ENCODE measurements at regions of chr22 and their contacts with region 1.

Region 1: DNA sequence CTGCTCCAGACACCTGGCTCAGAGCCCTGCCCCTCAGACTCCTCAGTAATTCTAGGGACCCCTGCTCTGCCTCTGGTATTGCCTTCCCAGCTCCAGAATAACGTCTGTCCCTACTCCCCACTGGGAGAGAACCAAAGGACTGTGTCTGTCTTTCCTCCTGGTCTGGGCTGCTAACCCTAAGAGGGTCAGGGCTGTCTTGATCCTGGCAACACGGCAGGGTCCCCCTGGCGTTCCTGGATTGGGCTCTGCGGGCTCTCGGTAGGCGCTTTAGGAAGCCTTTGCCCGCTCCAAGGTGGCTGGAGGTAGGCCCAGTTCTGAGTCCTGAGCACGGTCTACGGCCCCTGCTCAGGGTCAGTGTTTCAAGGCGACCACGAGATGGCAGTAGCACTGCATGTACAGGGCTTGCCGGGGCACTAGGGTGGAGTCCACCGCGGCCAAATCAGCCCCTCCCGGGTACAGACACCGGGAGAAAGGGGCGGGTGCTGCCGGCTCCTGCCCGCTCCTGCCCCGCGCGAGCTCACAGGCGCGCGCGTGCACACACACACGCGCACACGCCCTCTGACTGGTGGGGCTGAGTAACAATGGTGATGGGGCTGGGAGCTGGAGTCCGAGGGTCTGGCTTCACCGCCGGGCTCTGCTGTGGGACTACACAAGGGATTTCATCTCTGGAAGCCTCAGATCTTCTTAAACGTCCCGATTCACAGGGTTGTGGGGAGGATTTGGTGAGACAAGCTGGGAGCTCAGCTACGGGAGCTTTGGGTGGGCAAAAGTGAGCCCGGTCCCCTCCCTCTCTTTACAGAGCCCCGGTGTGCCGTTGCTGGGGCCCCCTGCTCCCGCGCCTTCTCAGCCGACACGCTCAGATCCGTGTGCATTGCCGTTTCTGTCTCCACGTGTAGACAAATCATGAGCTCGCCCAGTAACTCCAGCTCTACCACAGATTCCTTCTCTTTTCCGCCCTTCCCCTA is 30.1 kb upstream of the HMOX1 start:
- DNase-seq: peak; percentile 94 to 96 (median 95)
- ATAC-seq: peak; percentile 85 to 93 (median 89)
- H3K4me3 ChIP-seq: peak overlapping the region; percentile 33 to 51 (median 36)
- H3K27ac ChIP-seq: peak overlapping the region in 2 of 3 donors; percentile 35 to 53
- H3K4me1 ChIP-seq: peaks cover 0 to 20% (median 0%) of the 10 kb centered on the region in 4 donors
- H3K27me3 ChIP-seq: no peaks in the 10 kb centered on the region
- CTCF ChIP-seq: peak; percentile 95 to 98 (median 96)
- POLR2A ChIP-seq: no peak

Region 2: GRCh38 chr22:35085621-35086020 is 265.2 kb before region 1 on chr22:
- intact Hi-C with region 1: no loop called
- DNase-seq: peak in 1 of 3 donors; percentile 52
- ATAC-seq: peak in 3 of 4 donors; percentile 37 to 58 (median 50)
- H3K4me3 ChIP-seq: no peak overlapping the region
- H3K27ac ChIP-seq: no peak overlapping the region
- H3K4me1 ChIP-seq: no peaks in the 10 kb centered on the region
- H3K27me3 ChIP-seq: no peaks in the 10 kb centered on the region
- CTCF ChIP-seq: no peak
- POLR2A ChIP-seq: no peak

Region 3: GRCh38 chr22:35409783-35410662 is 59.2 kb after region 1 on chr22:
- intact Hi-C with region 1: loop called in 1 of 2 experiments (anchors 10 kb)
- DNase-seq: peak in 2 of 3 donors; percentile 57 to 71
- ATAC-seq: peak; percentile 48 to 74 (median 64)
- H3K4me3 ChIP-seq: no peak overlapping the region
- H3K27ac ChIP-seq: peak overlapping the region in 2 of 3 donors; percentile 37 to 43
- H3K4me1 ChIP-seq: no peaks in the 10 kb centered on the region
- H3K27me3 ChIP-seq: no peaks in the 10 kb centered on the region
- CTCF ChIP-seq: no peak
- POLR2A ChIP-seq: no peak

Region 4: GRCh38 chr22:35489239-35489638 is 138.4 kb after region 1 on chr22:
- intact Hi-C with region 1: no loop called
- DNase-seq: no peak
- ATAC-seq: no peak
- H3K4me3 ChIP-seq: no peak overlapping the region
- H3K27ac ChIP-seq: no peak overlapping the region
- H3K4me1 ChIP-seq: no peaks in the 10 kb centered on the region
- H3K27me3 ChIP-seq: no peaks in the 10 kb centered on the region
- CTCF ChIP-seq: no peak
- POLR2A ChIP-seq: no peak

Region 5: DNA sequence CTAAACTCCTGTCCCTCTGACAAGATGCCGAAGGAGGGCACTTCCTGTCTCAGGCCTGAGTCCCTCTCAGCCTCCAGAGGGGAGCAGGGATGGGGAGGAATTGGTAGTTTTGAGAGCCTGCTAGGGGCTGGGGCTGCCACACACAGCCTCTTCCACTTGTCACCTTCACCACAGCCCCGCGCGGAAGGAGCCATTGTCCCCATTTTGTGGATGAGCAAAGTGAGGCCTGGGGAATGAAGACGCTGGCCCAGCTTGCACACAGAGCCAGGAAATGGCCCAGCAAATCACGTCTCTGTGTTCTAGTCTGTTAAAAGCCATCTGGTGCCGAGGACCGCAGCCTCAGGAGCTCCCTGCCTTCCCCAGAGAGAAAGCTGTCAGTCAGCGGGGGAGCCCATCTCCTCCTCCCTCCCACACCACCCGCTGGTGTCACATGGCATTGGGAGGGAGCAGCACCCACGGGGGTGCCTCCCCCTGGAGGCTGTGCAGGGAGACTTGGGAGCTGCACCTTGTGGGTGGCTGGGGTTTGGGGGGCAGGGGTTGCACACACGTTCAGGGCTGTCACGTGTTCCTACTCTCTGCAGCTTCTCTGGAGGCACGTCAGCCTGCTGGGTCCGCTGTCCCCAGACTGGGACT is 224.4 kb after region 1 on chr22:
- intact Hi-C with region 1: loop called (anchors 5 to 10 kb)
- DNase-seq: no peak
- ATAC-seq: no peak
- H3K4me3 ChIP-seq: no peak overlapping the region
- H3K27ac ChIP-seq: no peak overlapping the region
- H3K4me1 ChIP-seq: no peaks in the 10 kb centered on the region
- H3K27me3 ChIP-seq: no peaks in the 10 kb centered on the region
- CTCF ChIP-seq: no peak
- POLR2A ChIP-seq: no peak

Region 6: DNA sequence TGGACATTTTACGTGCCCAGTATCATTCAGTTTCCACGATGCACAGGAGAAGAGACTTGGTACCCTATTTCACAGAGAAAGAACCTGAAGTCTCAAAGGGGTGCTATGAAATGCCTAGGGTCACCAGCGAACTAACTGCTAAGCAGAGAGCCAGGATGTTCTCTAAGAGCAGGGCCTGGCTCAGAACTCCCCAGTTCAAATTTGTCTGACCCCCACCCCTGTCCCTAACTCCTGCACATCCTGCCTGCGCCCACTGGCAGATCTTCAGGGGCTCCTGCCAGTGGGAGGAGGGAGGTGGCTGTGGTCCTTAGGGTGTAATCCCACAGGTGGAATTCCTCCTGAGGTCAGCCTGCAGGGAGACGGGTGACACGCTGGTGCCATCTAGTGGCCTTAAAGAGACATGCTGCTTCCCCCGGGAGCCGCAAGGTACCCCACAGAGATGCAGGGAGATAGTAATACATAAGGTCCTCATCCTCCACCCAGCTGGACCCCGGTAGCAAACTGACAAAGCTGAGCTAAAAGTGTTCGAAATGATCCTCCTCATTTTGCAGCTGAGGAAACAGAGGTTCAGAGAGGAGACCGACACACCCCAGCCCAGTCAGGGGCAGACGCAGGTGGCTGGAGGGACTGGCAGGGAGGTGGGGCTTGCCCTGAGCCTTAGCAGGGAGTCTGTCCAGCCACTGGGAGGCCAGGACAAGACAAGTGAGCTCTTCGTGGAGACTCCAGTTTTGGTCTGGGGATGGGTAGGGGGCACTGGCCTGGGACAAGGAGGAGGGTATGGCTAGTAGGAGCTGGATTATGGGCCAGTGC is 232.2 kb after region 1 on chr22:
- intact Hi-C with region 1: loop called (anchors 5 to 10 kb)
- DNase-seq: peak in 2 of 3 donors; percentile 45 to 62
- ATAC-seq: peak; percentile 84 to 93 (median 86)
- H3K4me3 ChIP-seq: no peak overlapping the region
- H3K27ac ChIP-seq: no peak overlapping the region
- H3K4me1 ChIP-seq: no peaks in the 10 kb centered on the region
- H3K27me3 ChIP-seq: no peaks in the 10 kb centered on the region
- CTCF ChIP-seq: peak; percentile 88 to 96 (median 94)
- POLR2A ChIP-seq: no peak